Heart left ventricle (tissue), 16 donors: ENCODE measurements at regions of chr10 and their contacts with region 1.

Region 1: GRCh38 chr10:31770307-31770902 is 158.2 kb downstream of the ARHGAP12 start:
- DNase-seq: peak in 2 of 5 donors; percentile 45 to 57
- ATAC-seq: peak in 3 of 4 donors; percentile 49 to 81 (median 62)
- H3K4me3 ChIP-seq: no peak overlapping the region
- H3K27ac ChIP-seq: peak overlapping the region in 2 of 12 donors; percentile 21 to 39
- H3K4me1 ChIP-seq: peaks cover 0 to 14% (median 2%) of the 10 kb centered on the region in 12 donors
- H3K27me3 ChIP-seq: no peaks in the 10 kb centered on the region
- CTCF ChIP-seq: peak; percentile 70 to 89 (median 81)
- POLR2A ChIP-seq: no peak

Region 2: DNA sequence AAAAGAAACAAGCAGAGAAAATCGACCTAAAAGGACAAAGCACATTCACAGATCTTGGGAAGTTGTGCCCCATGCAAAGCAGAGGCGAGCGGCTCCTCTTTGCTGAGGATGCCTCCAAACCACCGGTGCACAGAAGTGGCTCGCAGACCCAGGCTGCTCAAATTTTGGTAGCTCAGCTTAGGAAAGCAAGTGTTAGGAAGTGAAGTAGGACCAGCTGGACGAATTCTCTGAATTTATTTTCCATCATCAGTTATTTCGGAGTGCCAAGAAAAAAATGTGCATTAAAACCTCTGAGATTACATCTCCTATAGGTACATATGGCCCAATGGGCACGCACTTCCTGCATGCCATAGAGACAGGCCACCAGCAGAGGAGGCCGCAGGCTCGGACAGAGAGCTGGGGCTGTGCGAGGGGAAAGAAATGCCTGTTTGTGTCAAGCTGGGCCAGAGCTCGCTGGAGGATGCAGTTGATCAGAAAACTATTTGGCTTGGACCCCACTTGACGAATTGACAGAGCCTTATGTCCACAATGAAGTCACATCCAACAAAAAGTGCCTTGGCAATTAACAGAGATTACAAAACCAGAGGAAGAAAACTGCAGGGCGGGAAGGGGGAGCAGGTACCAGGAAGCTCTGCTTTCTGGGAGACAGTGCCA is 1018.6 kb before region 1 on chr10:
- intact Hi-C with region 1: loop called in 1 of 10 experiments (anchors 10 kb)
- DNase-seq: peak in 4 of 5 donors; percentile 69 to 84 (median 80)
- ATAC-seq: peak; percentile 64 to 87 (median 77)
- H3K4me3 ChIP-seq: no peak overlapping the region
- H3K27ac ChIP-seq: peak overlapping the region in 9 of 12 donors; percentile 3 to 68 (median 34)
- H3K4me1 ChIP-seq: peaks cover 0 to 23% (median 6%) of the 10 kb centered on the region in 12 donors
- H3K27me3 ChIP-seq: no peaks in the 10 kb centered on the region
- CTCF ChIP-seq: peak in 11 of 12 donors; percentile 12 to 97 (median 91)
- POLR2A ChIP-seq: no peak

Region 3: GRCh38 chr10:31515819-31516402 is 254.5 kb before region 1 on chr10:
- intact Hi-C with region 1: loop called in 2 of 10 experiments (anchors 10 kb)
- DNase-seq: no peak
- ATAC-seq: no peak
- H3K4me3 ChIP-seq: no peak overlapping the region
- H3K27ac ChIP-seq: no peak overlapping the region
- H3K4me1 ChIP-seq: peaks cover 0 to 22% (median 2%) of the 10 kb centered on the region in 12 donors
- H3K27me3 ChIP-seq: no peaks in the 10 kb centered on the region
- CTCF ChIP-seq: no peak
- POLR2A ChIP-seq: no peak

Region 4: GRCh38 chr10:31526681-31527080 is 243.7 kb before region 1 on chr10:
- intact Hi-C with region 1: loop called in 1 of 10 experiments (anchors 10 kb)
- DNase-seq: no peak
- ATAC-seq: peak in 2 of 4 donors; percentile 32 to 56
- H3K4me3 ChIP-seq: no peak overlapping the region
- H3K27ac ChIP-seq: peak overlapping the region in 6 of 12 donors; percentile 2 to 49 (median 26)
- H3K4me1 ChIP-seq: peaks cover 0 to 28% (median 9%) of the 10 kb centered on the region in 12 donors
- H3K27me3 ChIP-seq: no peaks in the 10 kb centered on the region
- CTCF ChIP-seq: no peak
- POLR2A ChIP-seq: no peak

Region 5: GRCh38 chr10:31883397-31883796 is 113.0 kb after region 1 on chr10:
- intact Hi-C with region 1: no loop called
- DNase-seq: no peak
- ATAC-seq: no peak
- H3K4me3 ChIP-seq: no peak overlapping the region
- H3K27ac ChIP-seq: peak overlapping the region in 1 of 12 donors; percentile 35
- H3K4me1 ChIP-seq: peaks cover 0 to 29% (median 12%) of the 10 kb centered on the region in 12 donors
- H3K27me3 ChIP-seq: no peaks in the 10 kb centered on the region
- CTCF ChIP-seq: no peak
- POLR2A ChIP-seq: no peak